K562 (cell line): ENCODE measurements at regions of chr9 and their contacts with region 1.

Region 1: GRCh38 chr9:128117613-128118471 is 9.7 kb downstream of the PTGES2 start:
- DNase-seq: peak; percentile 72 to 96 (median 76)
- ATAC-seq: peak; percentile 68
- H3K4me3 ChIP-seq: no peak overlapping the region
- H3K27ac ChIP-seq: peak overlapping the region; percentile 16; the same call in 1 of the 3 replicates
- H3K4me1 ChIP-seq: peaks cover 24 to 74% of the 10 kb centered on the region in 2 experiments; a peak in 4 of 5 replicates
- H3K27me3 ChIP-seq: no peaks in the 10 kb centered on the region
- CTCF ChIP-seq: peak; percentile 100
- EP300 ChIP-seq: peak; percentile 21; the same call in 1 of the 2 replicates
- POLR2A ChIP-seq: no peak
- RAD21 ChIP-seq: peak; percentile 99 to 100

Region 2: DNA sequence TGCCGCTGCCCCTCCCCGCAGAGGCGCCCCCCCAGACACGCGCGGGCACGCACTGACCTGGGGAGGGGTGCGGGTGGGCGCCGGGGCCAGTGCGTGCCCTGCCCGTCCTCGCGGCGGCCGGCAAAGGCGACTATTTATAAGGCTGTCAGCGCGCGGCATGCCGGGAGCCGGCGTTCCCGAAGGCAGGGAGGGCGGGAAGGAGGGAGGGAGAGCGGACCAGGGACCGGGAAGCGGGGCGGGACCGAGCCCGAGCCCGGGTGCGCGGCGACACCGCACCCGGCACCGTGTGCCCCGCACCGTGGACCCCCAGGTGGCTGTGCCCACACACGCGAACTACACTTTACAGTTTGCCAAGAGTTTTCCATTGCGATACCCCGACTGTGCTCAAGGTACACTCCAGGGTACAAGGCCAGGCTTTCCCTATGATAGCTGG is 240.3 kb before region 1 on chr9 and contains the start of gene AK1:
- CTCF ChIA-PET with region 1: no interaction called
- POLR2A ChIA-PET with region 1: no interaction called
- in situ Hi-C with region 1: no loop called
- intact Hi-C with region 1: no loop called
- DNase-seq: peak; percentile 68 to 82 (median 80)
- ATAC-seq: peak; percentile 85
- H3K4me3 ChIP-seq: peak within 1 kb of the TSS; percentile 46
- H3K27ac ChIP-seq: peak within 1 kb of the TSS; percentile 65
- H3K4me1 ChIP-seq: peaks cover 19 to 54% of the 10 kb centered on the region in 2 experiments; a peak in 4 of 5 replicates
- H3K27me3 ChIP-seq: no peaks in the 10 kb centered on the region
- CTCF ChIP-seq: no peak
- EP300 ChIP-seq: no peak
- POLR2A ChIP-seq: peak; percentile 55; the same call in 1 of the 2 replicates
- RAD21 ChIP-seq: no peak
- polyA plus RNA-seq, gene AK1: 10.1 to 38.9 TPM

Region 3: DNA sequence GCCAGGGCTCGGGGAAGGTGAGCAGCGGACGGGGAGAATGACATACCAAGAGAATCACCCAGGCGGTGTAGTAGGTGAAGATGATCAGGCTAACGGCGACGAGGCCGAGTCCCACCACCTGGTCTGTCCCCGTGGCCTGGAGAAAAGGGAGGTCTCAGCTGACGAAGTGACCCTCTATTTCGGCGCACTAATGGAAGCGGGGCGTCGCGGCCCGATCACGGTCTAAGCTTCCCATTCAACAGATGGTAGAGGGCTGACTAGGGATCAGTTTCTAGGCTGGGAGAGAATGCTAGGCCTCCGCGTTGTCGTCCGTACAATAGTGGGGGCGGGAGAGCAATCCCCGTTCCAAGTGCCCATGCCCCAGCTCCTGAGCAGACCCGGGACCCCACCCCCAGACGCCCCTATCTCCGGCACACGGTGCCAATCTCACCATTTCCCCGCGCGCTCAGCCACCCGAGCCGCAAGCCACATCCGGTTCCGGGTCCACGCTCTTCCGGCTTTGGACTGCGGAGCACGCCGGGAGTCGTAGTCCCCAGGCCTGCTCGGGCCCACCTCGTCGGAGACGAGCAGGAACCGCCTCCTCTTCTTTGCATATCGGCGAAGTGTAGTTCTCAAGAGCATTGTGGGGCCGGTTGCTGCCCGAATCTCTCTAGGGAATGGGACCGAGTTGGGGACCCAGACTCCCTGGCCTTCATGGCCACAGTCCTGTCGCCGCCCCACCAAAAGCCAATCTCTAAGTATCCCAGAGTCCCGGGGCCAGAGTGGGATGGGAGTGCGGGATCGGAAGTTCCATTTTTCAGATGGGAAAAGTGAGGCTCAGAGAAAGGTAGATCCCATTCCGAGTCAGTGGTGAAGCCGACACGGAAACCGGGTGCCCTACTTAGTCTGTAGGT is 180.2 kb before region 1 on chr9 and contains the start of gene DPM2:
- CTCF ChIA-PET with region 1: interaction called, 57 read pairs
- POLR2A ChIA-PET with region 1: no interaction called
- in situ Hi-C with region 1: loop called (anchors 5 kb)
- intact Hi-C with region 1: no loop called
- DNase-seq: peak; percentile 90 to 96 (median 90)
- ATAC-seq: peak; percentile 88
- H3K4me3 ChIP-seq: peak within 1 kb of the TSS; percentile 70
- H3K27ac ChIP-seq: peak within 1 kb of the TSS; percentile 88
- H3K4me1 ChIP-seq: peaks cover 68 to 87% of the 10 kb centered on the region in 2 experiments
- H3K27me3 ChIP-seq: no peaks in the 10 kb centered on the region
- CTCF ChIP-seq: no peak; a peak in 1 of 6 replicates
- EP300 ChIP-seq: no peak; the same call in 1 of the 2 replicates
- POLR2A ChIP-seq: peak; percentile 82
- RAD21 ChIP-seq: no peak
- polyA plus RNA-seq, gene DPM2: 43.5 to 69.3 TPM

Region 4: GRCh38 chr9:127943731-127944144 is 174.1 kb before region 1 on chr9:
- CTCF ChIA-PET with region 1: interaction called, 57 read pairs
- POLR2A ChIA-PET with region 1: interaction called, 3 read pairs
- in situ Hi-C with region 1: loop called (anchors 5 kb)
- intact Hi-C with region 1: loop called (anchors 1 kb)
- DNase-seq: peak; percentile 82 to 89 (median 84)
- ATAC-seq: peak; percentile 88
- H3K4me3 ChIP-seq: no peak overlapping the region
- H3K27ac ChIP-seq: peak overlapping the region; percentile 19; the same call in 1 of the 3 replicates
- H3K4me1 ChIP-seq: peaks cover 38 to 65% of the 10 kb centered on the region in 2 experiments
- H3K27me3 ChIP-seq: no peaks in the 10 kb centered on the region
- CTCF ChIP-seq: peak; percentile 93 to 95 (median 94)
- EP300 ChIP-seq: no peak
- POLR2A ChIP-seq: no peak
- RAD21 ChIP-seq: peak; percentile 94 to 97

Region 5: DNA sequence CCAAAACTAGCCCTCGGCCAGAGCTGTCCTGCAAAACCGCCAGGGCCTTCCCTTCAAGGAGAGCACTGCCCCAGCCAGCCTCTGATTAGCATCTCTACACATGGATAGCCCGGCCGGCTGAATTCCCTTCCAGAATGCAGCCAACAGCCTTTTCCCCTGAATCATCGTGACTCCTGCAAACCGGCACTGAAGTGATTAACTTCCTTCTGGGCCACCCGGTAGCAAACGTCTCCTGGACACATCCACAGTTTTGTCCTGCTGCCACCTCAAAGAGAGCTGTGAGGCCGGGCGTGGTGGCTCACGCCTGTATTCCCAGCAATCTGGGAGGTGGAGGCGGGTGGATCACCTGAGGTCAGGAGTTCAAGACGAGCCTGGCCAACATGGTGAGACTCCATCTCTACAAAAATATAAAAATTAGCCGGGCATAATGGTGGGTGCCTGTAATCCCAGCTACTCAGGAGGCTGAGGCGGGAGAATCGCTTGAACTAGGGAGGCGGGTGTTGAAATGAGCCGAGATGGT is 116.0 kb before region 1 on chr9:
- CTCF ChIA-PET with region 1: no interaction called
- POLR2A ChIA-PET with region 1: no interaction called
- in situ Hi-C with region 1: no loop called
- intact Hi-C with region 1: no loop called
- DNase-seq: peak; percentile 63 to 92 (median 72)
- ATAC-seq: peak; percentile 95
- H3K4me3 ChIP-seq: peak overlapping the region; percentile 12; the same call in 1 of the 2 replicates
- H3K27ac ChIP-seq: peak overlapping the region; percentile 90
- H3K4me1 ChIP-seq: peaks cover 23 to 37% of the 10 kb centered on the region in 2 experiments
- H3K27me3 ChIP-seq: no peaks in the 10 kb centered on the region
- CTCF ChIP-seq: peak in 1 of 3 experiments; percentile 10; a peak in 1 of 6 replicates
- EP300 ChIP-seq: peak; percentile 90
- POLR2A ChIP-seq: peak; percentile 84
- RAD21 ChIP-seq: peak; percentile 26 to 28; a peak in 2 of 4 replicates

Region 6: DNA sequence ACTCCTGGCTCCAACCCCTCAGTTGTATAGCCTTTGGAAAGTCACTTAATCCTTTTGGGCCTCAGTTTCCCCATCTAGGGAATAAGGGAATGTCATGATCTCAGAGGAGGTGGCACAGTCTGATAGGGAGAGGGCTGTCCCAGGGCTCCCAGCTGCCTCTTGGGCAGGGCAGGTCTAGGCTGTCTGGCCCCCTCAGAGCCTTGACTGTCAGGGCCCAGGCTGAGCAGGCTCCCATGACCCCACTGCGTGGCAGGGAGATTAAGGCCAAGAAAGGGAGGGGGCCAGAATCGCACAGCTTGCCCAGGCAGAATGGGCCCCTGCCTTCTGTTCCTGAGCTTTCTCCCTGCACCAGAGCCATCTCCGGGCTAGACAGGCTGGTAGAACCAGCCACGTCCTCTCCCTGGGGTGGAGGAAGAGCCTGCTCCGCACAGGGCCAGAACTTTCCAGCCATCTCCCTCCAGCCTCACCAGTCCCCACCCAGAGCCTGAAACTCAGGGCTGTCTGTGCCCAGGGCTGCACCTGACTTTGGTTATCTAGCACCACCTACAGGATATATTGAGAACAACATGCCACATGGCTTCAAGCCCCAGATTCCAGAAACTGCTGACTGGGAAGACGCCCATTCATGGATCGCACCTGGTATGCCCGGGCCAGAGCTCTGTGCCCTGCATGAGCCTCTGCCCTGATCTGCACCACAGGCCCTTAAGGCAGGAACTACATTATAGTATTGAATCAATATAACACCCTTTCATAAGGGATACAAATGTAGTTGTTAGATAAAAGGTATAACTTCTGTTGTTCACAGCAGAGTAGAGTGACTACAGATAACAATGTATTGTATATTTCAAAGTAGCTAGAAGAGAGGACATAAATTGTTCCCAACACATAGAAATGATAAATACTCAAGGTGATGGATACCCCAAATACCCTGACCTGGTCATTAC is 82.7 kb before region 1 on chr9:
- CTCF ChIA-PET with region 1: interaction called, 3 read pairs
- POLR2A ChIA-PET with region 1: no interaction called
- in situ Hi-C with region 1: no loop called
- intact Hi-C with region 1: loop called (anchors 5 kb)
- DNase-seq: peak; percentile 81 to 88 (median 86)
- ATAC-seq: peak; percentile 97
- H3K4me3 ChIP-seq: no peak overlapping the region
- H3K27ac ChIP-seq: no peak overlapping the region
- H3K4me1 ChIP-seq: peaks cover 7 to 8% of the 10 kb centered on the region in 2 experiments
- H3K27me3 ChIP-seq: no peaks in the 10 kb centered on the region
- CTCF ChIP-seq: peak; percentile 93 to 95 (median 93)
- EP300 ChIP-seq: peak; percentile 48
- POLR2A ChIP-seq: no peak
- RAD21 ChIP-seq: peak; percentile 96 to 98

Region 7: GRCh38 chr9:128055344-128056040 is 62.4 kb before region 1 on chr9:
- CTCF ChIA-PET with region 1: no interaction called
- POLR2A ChIA-PET with region 1: no interaction called
- in situ Hi-C with region 1: no loop called
- intact Hi-C with region 1: no loop called
- DNase-seq: peak in 1 of 4 experiments; percentile 6
- ATAC-seq: no peak
- H3K4me3 ChIP-seq: no peak overlapping the region
- H3K27ac ChIP-seq: no peak overlapping the region
- H3K4me1 ChIP-seq: peaks cover 8 to 13% of the 10 kb centered on the region in 2 experiments; a peak in 3 of 5 replicates
- H3K27me3 ChIP-seq: no peaks in the 10 kb centered on the region
- CTCF ChIP-seq: no peak
- EP300 ChIP-seq: no peak
- POLR2A ChIP-seq: no peak
- RAD21 ChIP-seq: no peak

Region 8: GRCh38 chr9:128067876-128068613 is 49.8 kb before region 1 on chr9 and contains the start of gene SLC25A25:
- CTCF ChIA-PET with region 1: interaction called, 5 read pairs
- POLR2A ChIA-PET with region 1: interaction called, 4 read pairs
- in situ Hi-C with region 1: no loop called
- intact Hi-C with region 1: loop called (anchors 5 kb)
- DNase-seq: peak; percentile 96 to 99 (median 98)
- ATAC-seq: peak; percentile 83
- H3K4me3 ChIP-seq: peak within 1 kb of the TSS; percentile 89
- H3K27ac ChIP-seq: peak within 1 kb of the TSS; percentile 95
- H3K4me1 ChIP-seq: peaks cover 33 to 45% of the 10 kb centered on the region in 2 experiments
- H3K27me3 ChIP-seq: no peaks in the 10 kb centered on the region
- CTCF ChIP-seq: no peak
- EP300 ChIP-seq: 0 out of 2 replicates have a peak, but pooled peaks have one; percentile 8
- POLR2A ChIP-seq: no peak
- RAD21 ChIP-seq: no peak
- polyA plus RNA-seq, gene SLC25A25: 0.07 to 0.10 TPM

Region 9: DNA sequence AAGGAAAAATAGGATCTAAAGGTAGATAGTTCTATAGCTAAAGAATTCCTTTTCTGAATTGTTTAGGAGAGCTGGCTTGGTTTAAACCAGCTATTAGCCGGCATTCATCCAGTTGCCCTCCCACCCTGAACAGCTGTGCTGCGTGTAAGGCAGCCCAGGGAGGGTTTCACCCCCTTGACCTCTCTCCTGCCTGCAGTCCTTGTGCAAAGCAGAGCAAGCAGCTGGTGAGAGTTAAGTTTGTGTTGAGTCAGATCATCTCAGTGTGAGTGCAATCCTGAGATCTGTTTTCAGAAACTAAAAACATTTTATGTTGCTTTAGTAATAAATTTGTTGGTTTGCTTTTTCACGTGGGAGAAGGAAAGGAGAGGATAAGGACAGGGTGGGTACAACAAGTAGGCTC is 36.8 kb before region 1 on chr9:
- CTCF ChIA-PET with region 1: interaction called, 4 read pairs
- POLR2A ChIA-PET with region 1: interaction called, 3 read pairs
- in situ Hi-C with region 1: no loop called
- intact Hi-C with region 1: loop called (anchors 5 kb)
- DNase-seq: peak; percentile 56 to 87 (median 67)
- ATAC-seq: peak; percentile 60
- H3K4me3 ChIP-seq: no peak overlapping the region
- H3K27ac ChIP-seq: peak overlapping the region; percentile 99
- H3K4me1 ChIP-seq: peaks cover 58 to 61% of the 10 kb centered on the region in 2 experiments
- H3K27me3 ChIP-seq: no peaks in the 10 kb centered on the region
- CTCF ChIP-seq: no peak
- EP300 ChIP-seq: peak; percentile 16; the same call in 1 of the 2 replicates
- POLR2A ChIP-seq: no peak
- RAD21 ChIP-seq: no peak

Region 10: DNA sequence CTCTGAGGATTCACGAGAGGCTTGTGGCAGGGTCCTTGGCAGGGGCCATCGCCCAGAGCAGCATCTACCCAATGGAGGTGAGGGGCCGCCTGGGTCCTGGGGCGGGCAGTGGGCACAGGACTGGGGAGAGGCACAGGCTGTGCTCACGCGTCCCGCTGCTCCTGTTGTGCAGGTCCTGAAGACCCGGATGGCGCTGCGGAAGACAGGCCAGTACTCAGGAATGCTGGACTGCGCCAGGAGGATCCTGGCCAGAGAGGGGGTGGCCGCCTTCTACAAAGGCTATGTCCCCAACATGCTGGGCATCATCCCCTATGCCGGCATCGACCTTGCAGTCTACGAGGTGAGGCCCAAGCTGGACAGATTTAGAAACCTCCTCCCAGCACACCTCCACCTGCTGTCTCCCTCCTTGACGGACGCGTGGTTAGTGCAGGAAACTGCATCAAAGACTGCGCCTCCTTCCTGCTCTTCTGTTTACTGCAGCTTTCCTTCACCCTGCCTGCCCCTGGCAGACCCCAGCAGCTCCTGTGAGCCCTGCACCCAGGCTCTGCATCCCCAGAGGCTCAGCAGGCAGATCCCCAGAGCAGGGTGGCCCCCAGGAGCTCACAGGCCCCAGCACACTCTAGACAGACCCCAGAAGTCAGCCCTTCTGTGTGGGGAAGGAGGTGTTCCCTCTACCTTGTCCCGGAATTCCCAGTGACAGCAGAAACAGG is 11.5 kb before region 1 on chr9:
- CTCF ChIA-PET with region 1: no interaction called
- POLR2A ChIA-PET with region 1: interaction called, 14 read pairs
- in situ Hi-C with region 1: no loop called
- intact Hi-C with region 1: no loop called
- DNase-seq: no peak
- ATAC-seq: no peak
- H3K4me3 ChIP-seq: no peak overlapping the region
- H3K27ac ChIP-seq: no peak overlapping the region
- H3K4me1 ChIP-seq: peaks cover 11 to 57% of the 10 kb centered on the region in 2 experiments; a peak in 4 of 5 replicates
- H3K27me3 ChIP-seq: no peaks in the 10 kb centered on the region
- CTCF ChIP-seq: 0 out of 6 replicates have a peak, but pooled peaks of 1 of the 3 experiments have one; percentile 13
- EP300 ChIP-seq: no peak
- POLR2A ChIP-seq: no peak
- RAD21 ChIP-seq: no peak

Region 11: DNA sequence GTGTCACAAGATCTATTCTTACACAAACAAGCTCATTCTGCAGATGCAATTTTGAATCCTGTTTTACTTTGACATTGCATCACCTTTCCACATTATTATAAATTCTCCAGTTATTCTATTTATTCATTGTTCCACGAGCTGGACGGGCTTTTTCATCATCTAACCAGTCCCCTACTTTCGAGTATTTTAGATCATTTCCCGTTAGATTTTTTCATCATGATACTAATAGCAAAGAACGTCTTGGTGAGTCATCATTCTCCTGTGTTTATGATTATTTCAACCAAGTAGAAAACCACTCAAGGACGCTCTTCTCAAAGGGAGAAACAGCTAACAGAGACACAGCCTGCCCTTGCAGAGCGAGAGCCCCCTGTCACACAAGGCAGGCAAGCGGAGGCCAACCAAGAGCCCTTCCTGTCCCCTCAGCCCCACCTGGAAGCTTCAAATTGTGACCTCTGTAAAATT is 57.3 kb after region 1 on chr9:
- CTCF ChIA-PET with region 1: no interaction called
- POLR2A ChIA-PET with region 1: no interaction called
- in situ Hi-C with region 1: no loop called
- intact Hi-C with region 1: no loop called
- DNase-seq: no peak
- ATAC-seq: no peak
- H3K4me3 ChIP-seq: no peak overlapping the region
- H3K27ac ChIP-seq: peak overlapping the region; percentile 5; the same call in 1 of the 3 replicates
- H3K4me1 ChIP-seq: peaks cover 0 to 24% of the 10 kb centered on the region in 2 experiments; a peak in 3 of 5 replicates
- H3K27me3 ChIP-seq: no peaks in the 10 kb centered on the region
- CTCF ChIP-seq: no peak
- EP300 ChIP-seq: no peak
- POLR2A ChIP-seq: no peak
- RAD21 ChIP-seq: no peak